ENCODE measurements at regions of chr11 and their contacts with region 1.

Region 1: GRCh38 chr11:74255741-74256369 is 55.6 kb downstream of the P4HA3 start:
- DNase-seq: peak in 8 of 9 donors; percentile 21 to 72 (median 62)
- ATAC-seq: peak; percentile 90
- H3K4me3 ChIP-seq: no peak overlapping the region
- H3K4me3 Mint-ChIP-seq: no peak overlapping the region
- H3K27ac ChIP-seq: no peak overlapping the region
- H3K27ac Mint-ChIP-seq: peak overlapping the region in 5 of 9 donors; percentile 4 to 68 (median 12)
- H3K4me1 ChIP-seq: peaks cover 0 to 6% of the 10 kb centered on the region in 2 donors
- H3K4me1 Mint-ChIP-seq: peaks cover 0 to 12% (median 5%) of the 10 kb centered on the region in 7 donors
- H3K27me3 ChIP-seq: no peaks in the 10 kb centered on the region
- H3K27me3 Mint-ChIP-seq: no peaks in the 10 kb centered on the region

Region 2: GRCh38 chr11:74232311-74232950 is 23.4 kb before region 1 on chr11:
- CTCF ChIA-PET with region 1: interaction called, 16 read pairs
- POLR2A ChIA-PET with region 1: no interaction called
- intact Hi-C with region 1: loop called in 1 of 2 experiments (anchors 1 kb)
- DNase-seq: peak in 7 of 9 donors; percentile 24 to 79 (median 68)
- ATAC-seq: peak; percentile 95
- H3K4me3 ChIP-seq: peak overlapping the region; percentile 5
- H3K4me3 Mint-ChIP-seq: peak overlapping the region in 8 of 10 donors; percentile 10 to 71 (median 40)
- H3K27ac ChIP-seq: peak overlapping the region; percentile 69
- H3K27ac Mint-ChIP-seq: peak overlapping the region in 2 of 9 donors; percentile 95 to 96
- H3K4me1 ChIP-seq: peaks cover 22 to 35% of the 10 kb centered on the region in 2 donors
- H3K4me1 Mint-ChIP-seq: peaks cover 7 to 46% (median 26%) of the 10 kb centered on the region in 7 donors
- H3K27me3 ChIP-seq: no peaks in the 10 kb centered on the region
- H3K27me3 Mint-ChIP-seq: no peaks in the 10 kb centered on the region

Region 3: GRCh38 chr11:74321487-74322188 is 65.8 kb after region 1 on chr11:
- CTCF ChIA-PET with region 1: interaction called, 23 read pairs
- POLR2A ChIA-PET with region 1: no interaction called
- intact Hi-C with region 1: loop called (anchors 1 kb)
- DNase-seq: peak in 4 of 9 donors; percentile 16 to 33 (median 28)
- ATAC-seq: peak; percentile 49
- H3K4me3 ChIP-seq: no peak overlapping the region
- H3K4me3 Mint-ChIP-seq: no peak overlapping the region
- H3K27ac ChIP-seq: no peak overlapping the region
- H3K27ac Mint-ChIP-seq: no peak overlapping the region
- H3K4me1 ChIP-seq: no peaks in the 10 kb centered on the region
- H3K4me1 Mint-ChIP-seq: peaks cover 0 to 6% (median 0%) of the 10 kb centered on the region in 7 donors
- H3K27me3 ChIP-seq: peaks cover 0 to 3% of the 10 kb centered on the region in 2 donors
- H3K27me3 Mint-ChIP-seq: peaks cover 0 to 22% (median 7%) of the 10 kb centered on the region in 5 donors

Region 4: GRCh38 chr11:74388678-74389327 is 132.9 kb after region 1 on chr11:
- CTCF ChIA-PET with region 1: interaction called, 3 read pairs
- POLR2A ChIA-PET with region 1: no interaction called
- intact Hi-C with region 1: loop called in 1 of 2 experiments (anchors 5 kb)
- DNase-seq: peak in 8 of 9 donors; percentile 34 to 74 (median 64)
- ATAC-seq: peak; percentile 93
- H3K4me3 ChIP-seq: no peak overlapping the region
- H3K4me3 Mint-ChIP-seq: no peak overlapping the region
- H3K27ac ChIP-seq: no peak overlapping the region
- H3K27ac Mint-ChIP-seq: peak overlapping the region in 3 of 9 donors; percentile 10 to 82 (median 79)
- H3K4me1 ChIP-seq: peaks cover 0 to 3% of the 10 kb centered on the region in 2 donors
- H3K4me1 Mint-ChIP-seq: peaks cover 19 to 39% (median 33%) of the 10 kb centered on the region in 7 donors
- H3K27me3 ChIP-seq: no peaks in the 10 kb centered on the region
- H3K27me3 Mint-ChIP-seq: no peaks in the 10 kb centered on the region

Measured in naive thymus-derived CD4-positive, alpha-beta T cell (primary cell).